Dendritic cell treated with granulocyte-macrophage colony-stimulating factor and Interleukin-4, amounts not matched to agents 40 ng/mL and 50 ng/mL, for 4 days (primary cell): ENCODE measurements at regions of chr15 and their contacts with region 1.

Region 1: GRCh38 chr15:73081321-73081958 is 29.2 kb downstream of the NEO1 start:
- H3K4me3 Mint-ChIP-seq: no peak overlapping the region
- H3K27ac Mint-ChIP-seq: no peak overlapping the region
- H3K4me1 Mint-ChIP-seq: no peaks in the 10 kb centered on the region
- H3K27me3 Mint-ChIP-seq: peaks cover 14% of the 10 kb centered on the region

Region 2: GRCh38 chr15:72599855-72600464 is 481.5 kb before region 1 on chr15:
- intact Hi-C with region 1: loop called (anchors 5 kb)
- H3K4me3 Mint-ChIP-seq: no peak overlapping the region
- H3K27ac Mint-ChIP-seq: no peak overlapping the region
- H3K4me1 Mint-ChIP-seq: no peaks in the 10 kb centered on the region
- H3K27me3 Mint-ChIP-seq: no peaks in the 10 kb centered on the region

Region 3: GRCh38 chr15:72796515-72797337 is 284.7 kb before region 1 on chr15:
- intact Hi-C with region 1: loop called (anchors 10 kb)
- H3K4me3 Mint-ChIP-seq: peak overlapping the region; percentile 81
- H3K27ac Mint-ChIP-seq: peak overlapping the region; percentile 79
- H3K4me1 Mint-ChIP-seq: peaks cover 22% of the 10 kb centered on the region
- H3K27me3 Mint-ChIP-seq: peaks cover 66% of the 10 kb centered on the region

Region 4: DNA sequence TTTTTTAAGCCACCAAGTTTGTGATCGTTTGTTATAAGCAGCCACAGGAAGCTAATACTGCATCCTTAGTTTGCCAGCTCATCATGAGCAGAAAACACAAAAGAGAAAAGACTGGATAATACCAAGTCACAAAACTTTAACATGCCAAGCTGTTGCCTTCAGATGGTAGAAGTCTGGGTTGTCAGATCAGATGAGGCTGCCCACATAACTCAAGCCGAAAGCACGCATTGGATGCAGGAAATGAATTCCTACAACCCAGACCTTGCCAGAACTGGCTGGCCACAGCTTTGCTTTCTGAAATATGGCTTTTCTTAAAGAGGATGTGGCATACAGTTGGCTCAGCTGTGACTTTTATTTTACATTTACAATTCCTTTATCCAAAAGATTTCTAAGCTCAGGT is 147.5 kb before region 1 on chr15:
- intact Hi-C with region 1: no loop called
- H3K4me3 Mint-ChIP-seq: no peak overlapping the region
- H3K27ac Mint-ChIP-seq: no peak overlapping the region
- H3K4me1 Mint-ChIP-seq: no peaks in the 10 kb centered on the region
- H3K27me3 Mint-ChIP-seq: peaks cover 17% of the 10 kb centered on the region

Region 5: GRCh38 chr15:73522011-73522410 is 440.6 kb after region 1 on chr15:
- intact Hi-C with region 1: no loop called
- H3K4me3 Mint-ChIP-seq: no peak overlapping the region
- H3K27ac Mint-ChIP-seq: no peak overlapping the region
- H3K4me1 Mint-ChIP-seq: peaks cover 24% of the 10 kb centered on the region
- H3K27me3 Mint-ChIP-seq: peaks cover 14% of the 10 kb centered on the region